OCI-LY7 (cell line): ENCODE measurements at regions of chr1 and their contacts with region 1.

Region 1: GRCh38 chr1:28341591-28341990 is 12.8 kb downstream of the MED18 start:
- DNase-seq: no peak
- H3K4me3 ChIP-seq: no peak overlapping the region
- H3K27ac ChIP-seq: no peak overlapping the region
- H3K4me1 ChIP-seq: no peaks in the 10 kb centered on the region
- CTCF ChIP-seq: no peak

Region 2: GRCh38 chr1:28354121-28354520 is 12.5 kb after region 1 on chr1:
- CTCF ChIA-PET with region 1: no interaction called
- POLR2A ChIA-PET with region 1: interaction called, 10 read pairs
- intact Hi-C with region 1: no loop called
- DNase-seq: no peak
- H3K4me3 ChIP-seq: no peak overlapping the region
- H3K27ac ChIP-seq: no peak overlapping the region
- H3K4me1 ChIP-seq: no peaks in the 10 kb centered on the region
- CTCF ChIP-seq: no peak